ENCODE measurements at regions of chr6 and their contacts with region 1.

Region 1: DNA sequence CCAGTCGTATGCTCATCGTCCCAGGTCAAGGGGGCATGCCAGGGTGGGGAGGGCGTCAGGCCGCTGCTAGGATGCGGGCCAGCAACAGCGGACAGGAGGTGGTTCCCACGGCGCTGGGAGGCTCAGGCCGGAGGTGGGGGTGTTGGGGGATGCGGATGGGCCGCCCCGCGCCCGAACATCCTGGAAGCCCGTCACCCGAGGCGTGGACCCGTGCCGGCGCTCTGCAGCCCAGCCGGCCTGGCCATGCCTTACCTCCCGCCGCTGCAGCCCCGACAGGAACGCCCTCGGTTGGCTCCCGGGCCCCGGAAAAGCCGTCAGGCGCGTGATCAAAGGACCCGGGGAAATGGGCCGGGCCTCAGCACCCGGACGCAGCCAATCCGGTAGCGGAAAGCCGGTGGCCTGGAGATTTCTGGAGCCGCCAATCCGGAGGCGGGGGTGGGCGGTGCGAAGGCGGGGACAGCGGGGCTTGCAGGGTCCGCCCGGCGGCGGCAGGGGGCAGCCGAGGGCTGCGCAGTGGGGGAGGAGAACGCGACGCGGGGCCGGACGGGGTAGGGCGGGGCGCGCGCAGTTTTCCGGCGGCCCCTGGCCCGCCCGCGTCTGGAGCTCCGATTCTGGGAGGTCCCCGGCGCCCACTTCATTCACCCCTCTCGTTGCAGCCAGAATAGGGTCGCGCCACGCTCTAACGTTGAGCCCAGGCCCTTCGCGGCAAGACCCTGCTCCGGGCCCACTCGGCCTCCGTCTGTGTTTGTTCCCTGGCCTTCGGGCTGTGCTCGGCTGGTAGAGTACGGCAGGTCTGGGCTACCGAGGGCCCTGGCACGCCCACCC is at the start of gene SMIM29:
- H3K4me3 ChIP-seq: peak within 1 kb of the TSS; percentile 79
- H3K27ac ChIP-seq: peak within 1 kb of the TSS; percentile 56; the same call in 1 of the 2 replicates
- H3K4me1 ChIP-seq: peaks cover 3% of the 10 kb centered on the region
- CTCF ChIP-seq: peak; percentile 78

Region 2: DNA sequence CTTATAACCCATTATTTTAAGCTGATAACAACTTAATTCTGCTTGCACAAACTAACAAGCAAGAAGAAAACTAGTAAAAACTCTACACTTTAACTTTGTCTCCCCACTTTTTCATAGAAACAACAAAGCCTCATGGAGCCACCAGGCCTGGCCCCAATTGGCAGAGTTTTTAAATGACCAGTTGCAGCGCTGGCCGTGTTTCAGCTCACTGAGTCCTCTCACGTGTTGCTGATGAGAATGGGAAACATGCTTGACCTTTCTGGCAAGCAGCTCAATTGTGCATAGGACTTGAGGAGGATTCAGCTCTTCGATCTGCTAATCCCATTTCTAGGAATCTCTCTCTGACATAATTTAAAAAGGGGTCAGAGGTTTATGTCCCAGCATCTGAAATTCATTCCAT is 78.6 kb before region 1 on chr6:
- CTCF ChIA-PET with region 1: no interaction called
- POLR2A ChIA-PET with region 1: no interaction called
- H3K4me3 ChIP-seq: no peak overlapping the region
- H3K27ac ChIP-seq: no peak overlapping the region
- H3K4me1 ChIP-seq: no peaks in the 10 kb centered on the region
- CTCF ChIP-seq: no peak

Region 3: GRCh38 chr6:34196126-34196830 is 52.7 kb before region 1 on chr6:
- CTCF ChIA-PET with region 1: interaction called, 38 read pairs
- POLR2A ChIA-PET with region 1: interaction called, 3 read pairs
- H3K4me3 ChIP-seq: peak overlapping the region; percentile 30
- H3K27ac ChIP-seq: no peak overlapping the region
- H3K4me1 ChIP-seq: no peaks in the 10 kb centered on the region
- CTCF ChIP-seq: peak; percentile 97

Region 4: DNA sequence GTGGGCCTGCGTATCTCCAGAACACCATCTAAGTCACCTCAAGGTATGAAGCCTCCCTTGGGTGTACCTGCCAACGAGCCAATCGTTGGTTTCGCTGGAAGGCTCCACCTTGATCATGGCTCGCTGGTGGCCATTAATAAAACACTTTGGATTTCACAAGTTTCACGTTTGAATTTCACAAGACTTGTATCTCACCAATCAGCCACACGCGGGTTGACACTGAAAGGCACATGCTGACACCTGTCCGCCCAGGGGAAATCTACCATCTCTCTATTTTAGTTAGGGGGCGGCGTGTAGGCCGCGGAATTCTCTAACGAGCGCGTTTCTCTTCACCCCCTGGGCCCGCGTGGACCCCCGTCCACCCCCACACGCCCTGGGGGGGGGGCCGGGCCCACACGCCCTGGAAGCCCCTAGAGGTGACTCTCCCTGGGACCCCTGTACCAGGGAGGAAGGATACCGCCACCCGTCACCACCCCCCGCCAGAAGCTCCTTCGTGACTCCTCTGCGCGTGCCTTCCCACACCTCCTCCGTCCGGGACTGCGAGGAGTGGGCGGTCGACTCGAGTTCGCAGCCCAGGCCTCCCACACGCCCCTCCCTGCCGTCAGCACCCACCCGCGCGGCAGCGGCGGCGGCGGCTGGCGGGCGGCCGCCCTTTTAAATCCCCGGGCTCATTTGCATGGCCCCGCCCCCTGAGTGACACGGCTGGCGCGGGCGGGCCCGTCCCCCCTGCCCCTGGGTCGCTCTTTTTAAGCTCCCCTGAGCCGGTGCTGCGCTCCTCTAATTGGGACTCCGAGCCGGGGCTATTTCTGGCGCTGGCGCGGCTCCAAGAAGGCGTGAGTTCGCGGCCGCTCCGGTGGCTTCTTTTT is 12.6 kb before region 1 on chr6 and contains the start of gene HMGA1:
- CTCF ChIA-PET with region 1: interaction called, 10 read pairs
- POLR2A ChIA-PET with region 1: interaction called, 10 read pairs
- H3K4me3 ChIP-seq: peak within 1 kb of the TSS; percentile 67
- H3K27ac ChIP-seq: peak within 1 kb of the TSS; percentile 88
- H3K4me1 ChIP-seq: peaks cover 6% of the 10 kb centered on the region; the same call in 1 of the 2 replicates
- CTCF ChIP-seq: peak; percentile 32; the same call in 1 of the 2 replicates

Region 5: DNA sequence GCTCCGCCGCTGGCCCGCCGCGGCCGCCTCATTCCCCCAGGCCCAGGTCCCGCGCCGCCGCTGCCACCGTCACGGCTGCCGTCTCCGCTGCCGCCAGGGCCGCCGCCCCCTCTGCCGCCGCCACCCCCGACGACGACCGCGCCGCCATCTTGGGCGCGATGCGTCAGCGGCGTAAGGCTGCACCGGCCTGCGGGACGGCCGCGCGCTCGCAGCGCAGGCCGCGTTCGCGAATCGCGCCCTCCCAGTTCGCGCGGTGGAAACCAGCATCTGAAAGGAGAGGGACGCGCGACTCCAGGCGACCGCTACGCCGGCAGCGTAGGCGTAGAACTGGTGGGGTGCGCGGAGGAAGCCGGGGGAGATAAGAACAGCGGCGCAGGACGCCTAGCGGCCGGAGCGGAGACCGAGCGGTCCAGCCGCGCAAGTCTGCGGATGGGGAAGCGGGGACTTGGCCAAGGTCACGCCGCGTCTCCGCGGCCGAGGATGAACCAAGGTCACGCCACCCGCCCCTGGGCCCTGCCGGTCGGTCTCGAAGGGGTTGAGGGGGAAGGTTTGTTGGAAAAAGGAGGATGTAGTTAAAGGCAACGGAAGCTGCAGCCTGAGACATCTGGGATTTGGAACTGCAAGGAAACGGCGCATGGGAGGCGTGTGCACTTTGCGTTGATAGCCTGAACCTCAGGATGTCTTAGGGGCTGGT is 143.7 kb after region 1 on chr6 and contains the start of gene NUDT3:
- CTCF ChIA-PET with region 1: interaction called, 31 read pairs
- POLR2A ChIA-PET with region 1: interaction called, 6 read pairs
- H3K4me3 ChIP-seq: peak within 1 kb of the TSS; percentile 74
- H3K27ac ChIP-seq: peak within 1 kb of the TSS; percentile 81
- H3K4me1 ChIP-seq: peaks cover 2% of the 10 kb centered on the region; the same call in 1 of the 2 replicates
- CTCF ChIP-seq: peak; percentile 98

Region 6: GRCh38 chr6:34425498-34426410 is 176.8 kb after region 1 on chr6 and contains the start of gene RPS10:
- CTCF ChIA-PET with region 1: interaction called, 10 read pairs
- POLR2A ChIA-PET with region 1: interaction called, 20 read pairs
- H3K4me3 ChIP-seq: peak within 1 kb of the TSS; percentile 58
- H3K27ac ChIP-seq: peak within 1 kb of the TSS; percentile 97
- H3K4me1 ChIP-seq: peaks cover 2% of the 10 kb centered on the region; the same call in 1 of the 2 replicates
- CTCF ChIP-seq: no peak